CD4-positive, alpha-beta T cell (primary cell): ENCODE measurements at regions of chr16 and their contacts with region 1.

Region 1: GRCh38 chr16:68289621-68290329 is 21.0 kb downstream of the SLC7A6OS start:
- DNase-seq: peak in 10 of 14 experiments; percentile 27 to 68 (median 40)
- ATAC-seq: peak; percentile 38
- H3K4me3 ChIP-seq: no peak overlapping the region
- H3K4me3 Mint-ChIP-seq: peak overlapping the region; percentile 70
- H3K27ac ChIP-seq: peak overlapping the region; percentile 74 to 83
- H3K27ac Mint-ChIP-seq: peak overlapping the region; percentile 87
- H3K4me1 ChIP-seq: peaks cover 93% of the 10 kb centered on the region
- H3K4me1 Mint-ChIP-seq: peaks cover 87% of the 10 kb centered on the region
- H3K27me3 ChIP-seq: no peaks in the 10 kb centered on the region
- H3K27me3 Mint-ChIP-seq: no peaks in the 10 kb centered on the region
- CTCF ChIP-seq: no peak

Region 2: GRCh38 chr16:68270353-68270752 is 19.4 kb before region 1 on chr16:
- CTCF ChIA-PET with region 1: interaction called, 278 read pairs
- POLR2A ChIA-PET with region 1: interaction called, 271 read pairs
- intact Hi-C with region 1: loop called (anchors 1 kb)
- DNase-seq: peak in 3 of 14 experiments; percentile 23 to 63 (median 46)
- ATAC-seq: no peak
- H3K4me3 ChIP-seq: no peak overlapping the region
- H3K4me3 Mint-ChIP-seq: peak overlapping the region; percentile 18
- H3K27ac ChIP-seq: peak overlapping the region; percentile 71 to 84
- H3K27ac Mint-ChIP-seq: peak overlapping the region; percentile 94
- H3K4me1 ChIP-seq: peaks cover 96% of the 10 kb centered on the region
- H3K4me1 Mint-ChIP-seq: peaks cover 91% of the 10 kb centered on the region
- H3K27me3 ChIP-seq: no peaks in the 10 kb centered on the region
- H3K27me3 Mint-ChIP-seq: no peaks in the 10 kb centered on the region
- CTCF ChIP-seq: no peak

Region 3: DNA sequence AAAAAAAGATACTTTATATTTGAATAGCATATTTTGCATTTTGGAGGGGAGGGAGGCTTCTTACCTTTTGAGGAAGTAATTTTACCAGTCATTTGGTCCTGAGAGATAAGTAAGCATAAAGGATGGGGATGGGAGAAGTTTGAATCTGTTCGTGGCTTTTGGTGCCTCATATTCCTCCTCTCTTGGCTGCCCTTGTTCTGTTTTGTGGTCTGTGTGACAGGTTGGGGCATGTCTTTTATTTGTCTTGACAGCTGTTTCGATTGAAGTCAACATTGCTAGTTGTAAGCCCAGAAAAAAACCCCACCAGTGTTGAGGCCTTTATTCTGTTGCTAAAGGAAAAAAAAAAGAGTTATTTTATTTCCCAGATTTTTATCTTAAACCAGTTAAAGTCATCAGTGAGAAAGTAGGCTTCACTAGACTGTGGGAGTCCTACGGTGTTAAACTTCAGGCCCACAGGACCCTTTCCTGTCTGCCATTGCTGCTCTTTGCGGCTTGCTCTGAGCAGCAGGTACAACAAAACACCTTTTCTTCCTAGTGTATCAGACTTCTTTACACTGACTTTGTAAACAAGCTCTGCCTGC is 14.1 kb before region 1 on chr16:
- CTCF ChIA-PET with region 1: interaction called, 19 read pairs
- POLR2A ChIA-PET with region 1: interaction called, 271 read pairs
- intact Hi-C with region 1: loop called in 1 of 2 experiments (anchors 2 kb)
- DNase-seq: peak in 13 of 14 experiments; percentile 36 to 87 (median 55)
- ATAC-seq: peak; percentile 75
- H3K4me3 ChIP-seq: peak overlapping the region; percentile 5
- H3K4me3 Mint-ChIP-seq: peak overlapping the region; percentile 66
- H3K27ac ChIP-seq: peak overlapping the region; percentile 71 to 74
- H3K27ac Mint-ChIP-seq: peak overlapping the region; percentile 94
- H3K4me1 ChIP-seq: peaks cover 93% of the 10 kb centered on the region
- H3K4me1 Mint-ChIP-seq: peaks cover 73% of the 10 kb centered on the region
- H3K27me3 ChIP-seq: no peaks in the 10 kb centered on the region
- H3K27me3 Mint-ChIP-seq: no peaks in the 10 kb centered on the region
- CTCF ChIP-seq: no peak

Region 4: GRCh38 chr16:68369697-68370580 is 80.2 kb after region 1 on chr16:
- CTCF ChIA-PET with region 1: no interaction called
- POLR2A ChIA-PET with region 1: no interaction called
- intact Hi-C with region 1: no loop called
- DNase-seq: peak in 4 of 14 experiments; percentile 35 to 59 (median 43)
- ATAC-seq: peak; percentile 32
- H3K4me3 ChIP-seq: peak overlapping the region; percentile 12
- H3K4me3 Mint-ChIP-seq: peak overlapping the region; percentile 69
- H3K27ac ChIP-seq: no peak overlapping the region
- H3K27ac Mint-ChIP-seq: no peak overlapping the region
- H3K4me1 ChIP-seq: peaks cover 53% of the 10 kb centered on the region
- H3K4me1 Mint-ChIP-seq: peaks cover 50% of the 10 kb centered on the region
- H3K27me3 ChIP-seq: peaks cover 0 to 4% of the 10 kb centered on the region in 2 experiments
- H3K27me3 Mint-ChIP-seq: no peaks in the 10 kb centered on the region
- CTCF ChIP-seq: no peak

Region 5: DNA sequence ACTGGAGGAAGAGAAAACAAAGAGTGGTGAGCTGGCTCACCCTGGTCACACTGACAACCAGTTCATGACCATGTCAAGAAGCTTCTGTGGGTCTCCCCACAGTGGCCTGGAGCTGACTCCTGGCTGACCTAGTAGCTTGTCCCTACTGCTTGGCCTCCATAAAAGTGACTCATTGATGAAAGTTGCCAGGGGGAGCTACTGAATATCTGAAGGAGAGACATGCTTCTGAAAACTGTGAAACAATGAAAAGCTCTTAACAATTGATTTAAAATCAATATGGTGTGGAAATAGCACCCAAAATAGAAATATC is 136.5 kb after region 1 on chr16:
- CTCF ChIA-PET with region 1: no interaction called
- POLR2A ChIA-PET with region 1: no interaction called
- intact Hi-C with region 1: no loop called
- DNase-seq: no peak
- ATAC-seq: no peak
- H3K4me3 ChIP-seq: no peak overlapping the region
- H3K4me3 Mint-ChIP-seq: no peak overlapping the region
- H3K27ac ChIP-seq: no peak overlapping the region
- H3K27ac Mint-ChIP-seq: peak overlapping the region; percentile 77
- H3K4me1 ChIP-seq: peaks cover 31% of the 10 kb centered on the region
- H3K4me1 Mint-ChIP-seq: peaks cover 44% of the 10 kb centered on the region
- H3K27me3 ChIP-seq: no peaks in the 10 kb centered on the region
- H3K27me3 Mint-ChIP-seq: no peaks in the 10 kb centered on the region
- CTCF ChIP-seq: no peak